GM12878 (cell line): ENCODE measurements at regions of chr17 and their contacts with region 1.

Region 1: GRCh38 chr17:1122533-1123392 is 57.0 kb downstream of the ABR start:
- DNase-seq: no peak
- ATAC-seq: peak; percentile 97
- H3K4me3 ChIP-seq: no peak overlapping the region
- H3K27ac ChIP-seq: no peak overlapping the region
- H3K4me1 ChIP-seq: peaks cover 6% of the 10 kb centered on the region
- H3K27me3 ChIP-seq: no peaks in the 10 kb centered on the region
- CTCF ChIP-seq: peak; percentile 73 to 92 (median 88)
- EP300 ChIP-seq: no peak
- POLR2A ChIP-seq: no peak
- RAD21 ChIP-seq: peak; percentile 88

Region 2: DNA sequence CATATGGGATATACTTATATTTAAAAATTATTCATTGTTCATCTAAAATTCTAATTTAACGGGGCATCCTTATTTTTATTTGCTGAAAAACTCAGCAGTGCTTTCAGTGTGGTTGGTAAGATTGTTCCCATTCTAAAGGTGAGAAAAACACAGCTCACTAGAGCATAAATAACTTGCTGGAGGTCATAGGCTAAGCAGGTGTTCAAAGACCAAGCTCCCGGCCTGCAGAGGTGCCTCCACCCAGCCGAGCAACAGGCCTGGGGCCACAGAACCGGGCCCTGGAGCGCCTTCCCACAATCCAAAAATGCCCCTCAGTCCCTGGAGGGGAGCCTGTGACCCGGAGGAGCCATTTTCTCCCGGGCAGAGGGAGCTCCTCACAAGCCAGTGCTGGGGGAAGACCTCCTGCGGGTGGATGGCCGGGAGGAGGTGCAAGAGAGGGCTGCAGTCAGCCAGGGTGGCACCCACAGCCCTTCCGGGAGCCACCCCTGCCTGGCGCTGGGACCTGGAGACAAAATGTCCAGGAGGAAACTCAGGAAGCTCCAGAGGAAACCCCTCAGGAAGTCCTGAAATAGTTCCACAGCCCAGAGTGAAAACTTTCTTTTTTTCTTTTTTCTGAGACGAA is 42.3 kb after region 1 on chr17:
- CTCF ChIA-PET with region 1: interaction called, 27 read pairs
- POLR2A ChIA-PET with region 1: interaction called, 5 read pairs
- RAD21 ChIA-PET with region 1: interaction called, 4 read pairs
- SMC1A ChIA-PET with region 1: interaction called, 11 read pairs
- in situ Hi-C with region 1: no loop called
- intact Hi-C with region 1: no loop called
- DNase-seq: no peak
- ATAC-seq: peak; percentile 82
- H3K4me3 ChIP-seq: no peak overlapping the region; the same call in 1 of the 2 replicates
- H3K27ac ChIP-seq: peak overlapping the region; percentile 31; the same call in 1 of the 2 replicates
- H3K4me1 ChIP-seq: peaks cover 8% of the 10 kb centered on the region
- H3K27me3 ChIP-seq: no peaks in the 10 kb centered on the region
- CTCF ChIP-seq: peak; percentile 16 to 21 (median 20); a peak in 2 of 6 replicates
- EP300 ChIP-seq: no peak
- POLR2A ChIP-seq: no peak
- RAD21 ChIP-seq: no peak

Region 3: GRCh38 chr17:1179818-1180742 is 57.3 kb after region 1 on chr17 and contains the start of gene ABR:
- CTCF ChIA-PET with region 1: interaction called, 115 read pairs
- POLR2A ChIA-PET with region 1: interaction called, 3 read pairs
- RAD21 ChIA-PET with region 1: interaction called, 24 read pairs
- SMC1A ChIA-PET with region 1: interaction called, 13 read pairs
- in situ Hi-C with region 1: no loop called
- intact Hi-C with region 1: no loop called
- DNase-seq: no peak
- ATAC-seq: peak; percentile 5
- H3K4me3 ChIP-seq: peak within 1 kb of the TSS; percentile 85
- H3K27ac ChIP-seq: peak within 1 kb of the TSS; percentile 89
- H3K4me1 ChIP-seq: peaks cover 57% of the 10 kb centered on the region
- H3K27me3 ChIP-seq: no peaks in the 10 kb centered on the region
- CTCF ChIP-seq: no peak
- EP300 ChIP-seq: no peak
- POLR2A ChIP-seq: peak; percentile 61
- RAD21 ChIP-seq: no peak
- polyA plus RNA-seq, gene ABR: 1.4 to 2.5 TPM

Region 4: GRCh38 chr17:1186923-1187771 is 64.4 kb after region 1 on chr17:
- CTCF ChIA-PET with region 1: interaction called, 115 read pairs
- POLR2A ChIA-PET with region 1: interaction called, 3 read pairs
- RAD21 ChIA-PET with region 1: interaction called, 24 read pairs
- SMC1A ChIA-PET with region 1: interaction called, 13 read pairs
- in situ Hi-C with region 1: no loop called
- intact Hi-C with region 1: loop called (anchors 1 kb)
- DNase-seq: no peak
- ATAC-seq: peak; percentile 78
- H3K4me3 ChIP-seq: no peak overlapping the region
- H3K27ac ChIP-seq: no peak overlapping the region
- H3K4me1 ChIP-seq: peaks cover 56% of the 10 kb centered on the region
- H3K27me3 ChIP-seq: no peaks in the 10 kb centered on the region
- CTCF ChIP-seq: peak; percentile 92 to 99 (median 92)
- EP300 ChIP-seq: no peak
- POLR2A ChIP-seq: no peak
- RAD21 ChIP-seq: peak; percentile 84

Region 5: DNA sequence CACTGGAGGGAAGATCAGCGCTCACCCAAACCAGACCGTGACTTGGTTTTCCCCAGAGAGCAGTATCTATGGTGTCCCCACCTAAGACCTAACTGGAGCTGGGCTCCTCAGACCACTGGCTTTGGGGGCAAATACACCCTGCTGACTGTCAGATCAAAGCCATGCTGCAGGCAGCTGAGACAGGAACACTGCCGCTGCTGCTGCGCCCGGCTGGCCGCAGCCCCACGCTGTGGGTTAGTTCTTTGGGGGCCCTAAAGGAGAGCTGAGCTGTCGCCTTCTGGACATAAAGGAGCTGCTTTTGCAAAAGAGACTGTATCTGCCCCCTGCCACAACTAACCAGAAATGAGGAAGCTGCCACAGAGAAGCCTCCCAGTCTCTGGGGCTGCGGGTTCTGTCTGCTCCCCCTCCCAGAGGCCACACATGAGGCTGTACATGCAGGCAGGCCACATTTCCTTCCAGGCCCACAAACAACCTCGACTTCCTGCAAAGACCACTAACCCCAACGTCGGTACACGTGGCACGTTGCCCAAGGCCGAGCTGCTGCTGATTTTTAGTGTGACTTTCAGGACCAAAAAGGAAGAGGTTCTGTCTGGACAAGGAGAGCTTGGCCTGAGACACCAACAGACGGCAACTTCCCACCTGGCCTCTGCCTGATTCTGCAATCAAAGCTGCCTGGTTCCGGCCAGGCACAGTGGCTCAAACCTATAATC is 75.2 kb after region 1 on chr17:
- CTCF ChIA-PET with region 1: interaction called, 21 read pairs
- POLR2A ChIA-PET with region 1: no interaction called
- RAD21 ChIA-PET with region 1: interaction called, 11 read pairs
- SMC1A ChIA-PET with region 1: no interaction called
- in situ Hi-C with region 1: loop called (anchors 5 kb)
- intact Hi-C with region 1: no loop called
- DNase-seq: peak; percentile 97
- ATAC-seq: peak; percentile 88
- H3K4me3 ChIP-seq: peak overlapping the region; percentile 29; the same call in 1 of the 2 replicates
- H3K27ac ChIP-seq: peak overlapping the region; percentile 89
- H3K4me1 ChIP-seq: peaks cover 56% of the 10 kb centered on the region
- H3K27me3 ChIP-seq: no peaks in the 10 kb centered on the region
- CTCF ChIP-seq: no peak
- EP300 ChIP-seq: peak; percentile 64 to 81; a peak in 3 of 4 replicates
- POLR2A ChIP-seq: peak; percentile 57; the same call in 1 of the 2 replicates
- RAD21 ChIP-seq: 0 out of 2 replicates have a peak, but pooled peaks have one; percentile 11

Region 6: GRCh38 chr17:1260086-1260769 is 137.5 kb after region 1 on chr17:
- CTCF ChIA-PET with region 1: interaction called, 8 read pairs
- POLR2A ChIA-PET with region 1: no interaction called
- RAD21 ChIA-PET with region 1: interaction called, 6 read pairs
- SMC1A ChIA-PET with region 1: no interaction called
- in situ Hi-C with region 1: no loop called
- intact Hi-C with region 1: loop called (anchors 5 kb)
- DNase-seq: no peak
- ATAC-seq: no peak
- H3K4me3 ChIP-seq: no peak overlapping the region
- H3K27ac ChIP-seq: no peak overlapping the region
- H3K4me1 ChIP-seq: peaks cover 5% of the 10 kb centered on the region
- H3K27me3 ChIP-seq: peaks cover 2 to 4% of the 10 kb centered on the region in 2 experiments
- CTCF ChIP-seq: no peak
- EP300 ChIP-seq: no peak
- POLR2A ChIP-seq: no peak
- RAD21 ChIP-seq: no peak

Region 7: DNA sequence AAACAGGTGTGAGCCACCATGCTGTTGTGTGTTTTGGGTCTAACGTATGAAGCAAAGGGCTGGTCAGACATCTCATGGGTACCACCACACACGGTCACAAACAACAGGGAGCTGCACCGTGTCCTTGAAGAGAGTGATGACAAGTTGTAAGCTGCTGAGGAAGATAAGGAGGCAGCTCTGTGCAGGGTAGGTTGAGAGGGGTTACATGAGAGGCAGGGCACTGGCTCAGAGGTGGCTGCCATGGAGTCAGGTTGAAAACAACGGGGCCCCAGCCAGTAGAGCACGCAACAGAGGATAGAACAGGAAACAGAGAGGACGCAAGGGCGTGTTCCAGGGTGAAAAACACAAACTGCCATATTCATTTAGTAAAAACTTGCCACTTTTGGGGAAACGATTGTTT is 208.9 kb after region 1 on chr17:
- CTCF ChIA-PET with region 1: interaction called, 12 read pairs
- POLR2A ChIA-PET with region 1: no interaction called
- RAD21 ChIA-PET with region 1: interaction called, 17 read pairs
- SMC1A ChIA-PET with region 1: interaction called, 7 read pairs
- in situ Hi-C with region 1: loop called (anchors 10 kb)
- intact Hi-C with region 1: loop called (anchors 5 kb)
- DNase-seq: no peak
- ATAC-seq: no peak
- H3K4me3 ChIP-seq: no peak overlapping the region
- H3K27ac ChIP-seq: no peak overlapping the region
- H3K4me1 ChIP-seq: no peaks in the 10 kb centered on the region
- H3K27me3 ChIP-seq: no peaks in the 10 kb centered on the region; a peak in 1 of 4 replicates
- CTCF ChIP-seq: no peak
- EP300 ChIP-seq: no peak
- POLR2A ChIP-seq: no peak
- RAD21 ChIP-seq: no peak